ENCODE measurements at regions of chr18 and their contacts with region 1.

Region 1: GRCh38 chr18:35616664-35617423 is 35.3 kb downstream of the GALNT1 start:
- H3K4me3 Mint-ChIP-seq: no peak overlapping the region
- H3K27ac Mint-ChIP-seq: no peak overlapping the region
- H3K4me1 Mint-ChIP-seq: peaks cover 15% of the 10 kb centered on the region
- H3K27me3 Mint-ChIP-seq: no peaks in the 10 kb centered on the region

Region 2: DNA sequence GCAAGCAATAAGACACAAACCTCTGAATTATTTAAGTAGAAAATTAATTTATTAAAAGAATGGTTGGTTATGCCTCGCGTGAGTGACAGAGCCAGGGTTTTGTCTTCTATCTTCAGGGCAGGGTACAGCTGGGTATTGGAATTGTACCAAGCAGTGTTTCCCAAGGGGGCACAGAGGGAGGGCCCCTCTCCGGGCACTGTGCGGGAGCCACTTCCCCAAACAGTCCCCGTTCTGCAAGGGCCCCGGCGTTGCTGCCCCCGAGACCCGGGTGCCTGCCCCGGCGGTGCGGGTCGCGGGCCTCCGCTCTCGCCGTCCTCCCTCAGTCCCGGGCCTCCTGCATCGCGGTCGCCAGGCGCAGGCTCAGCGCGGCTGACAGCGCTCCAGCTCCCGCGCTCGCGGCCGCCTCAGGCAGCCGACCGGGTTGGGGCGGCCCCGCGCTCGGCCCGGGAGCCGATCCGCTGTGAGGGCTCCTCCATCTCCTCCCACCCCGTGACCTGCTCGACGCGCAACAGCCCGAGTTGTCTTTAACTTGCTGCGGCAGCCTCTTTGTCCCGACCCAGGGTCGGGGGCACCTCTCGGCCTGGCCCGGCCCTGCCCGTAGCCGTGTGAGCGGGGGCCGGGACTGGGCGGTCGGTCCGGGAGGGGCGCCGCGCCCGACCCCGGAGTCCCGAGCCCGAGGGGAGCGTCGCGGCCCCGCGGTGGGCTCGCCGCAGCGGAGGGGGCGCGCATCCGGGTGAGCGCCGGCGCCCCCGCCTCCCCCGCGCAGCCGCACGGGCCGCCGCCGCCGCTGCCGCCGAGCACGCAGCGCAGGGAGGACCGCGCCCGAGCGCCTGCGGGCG is 35.9 kb before region 1 on chr18:
- intact Hi-C with region 1: loop called (anchors 5 kb)
- H3K4me3 Mint-ChIP-seq: peak overlapping the region; percentile 76
- H3K27ac Mint-ChIP-seq: peak overlapping the region; percentile 68
- H3K4me1 Mint-ChIP-seq: peaks cover 29% of the 10 kb centered on the region
- H3K27me3 Mint-ChIP-seq: no peaks in the 10 kb centered on the region